BJ (cell line): ENCODE measurements at regions of chr1 and their contacts with region 1.

Region 1: DNA sequence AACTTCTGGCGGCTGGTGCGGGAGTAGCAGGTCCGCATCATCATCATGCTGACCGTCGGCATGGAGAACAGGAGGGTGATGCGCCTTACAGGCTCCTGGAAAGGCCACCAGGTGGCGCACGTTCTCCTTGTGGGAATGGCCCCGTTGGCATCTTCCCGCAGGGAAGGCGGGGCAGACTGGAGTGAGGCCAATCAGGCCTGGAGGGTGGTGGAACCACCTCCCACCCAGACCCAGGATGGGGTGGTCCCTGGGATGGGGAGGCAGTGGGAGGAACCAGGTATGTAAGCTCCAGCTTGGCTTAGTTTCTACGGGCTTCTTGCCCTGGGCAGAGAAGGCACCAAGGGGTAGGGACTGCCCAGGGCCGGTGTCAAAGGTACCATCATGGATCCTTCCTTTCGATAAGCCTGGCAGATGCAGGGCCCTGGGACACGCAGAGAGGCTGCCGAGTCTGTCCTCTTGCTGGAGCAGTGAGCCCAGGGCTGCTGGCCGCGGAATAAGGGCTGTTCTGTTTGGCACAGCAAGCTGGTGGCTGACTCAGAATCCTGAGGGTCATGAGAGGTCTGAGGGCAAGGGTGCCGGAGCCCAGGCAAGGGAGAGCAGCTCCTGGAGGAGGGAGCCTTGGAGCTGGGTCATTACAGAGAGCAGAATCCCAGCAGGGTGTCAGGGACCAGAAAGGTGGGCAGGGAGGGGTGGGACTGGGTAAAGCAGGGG is 8.7 kb upstream of the LGR6 start:
- DNase-seq: peak; percentile 10
- H3K4me3 ChIP-seq: no peak overlapping the region
- H3K27me3 ChIP-seq: peaks cover 25% of the 10 kb centered on the region
- CTCF ChIP-seq: peak; percentile 95

Region 2: DNA sequence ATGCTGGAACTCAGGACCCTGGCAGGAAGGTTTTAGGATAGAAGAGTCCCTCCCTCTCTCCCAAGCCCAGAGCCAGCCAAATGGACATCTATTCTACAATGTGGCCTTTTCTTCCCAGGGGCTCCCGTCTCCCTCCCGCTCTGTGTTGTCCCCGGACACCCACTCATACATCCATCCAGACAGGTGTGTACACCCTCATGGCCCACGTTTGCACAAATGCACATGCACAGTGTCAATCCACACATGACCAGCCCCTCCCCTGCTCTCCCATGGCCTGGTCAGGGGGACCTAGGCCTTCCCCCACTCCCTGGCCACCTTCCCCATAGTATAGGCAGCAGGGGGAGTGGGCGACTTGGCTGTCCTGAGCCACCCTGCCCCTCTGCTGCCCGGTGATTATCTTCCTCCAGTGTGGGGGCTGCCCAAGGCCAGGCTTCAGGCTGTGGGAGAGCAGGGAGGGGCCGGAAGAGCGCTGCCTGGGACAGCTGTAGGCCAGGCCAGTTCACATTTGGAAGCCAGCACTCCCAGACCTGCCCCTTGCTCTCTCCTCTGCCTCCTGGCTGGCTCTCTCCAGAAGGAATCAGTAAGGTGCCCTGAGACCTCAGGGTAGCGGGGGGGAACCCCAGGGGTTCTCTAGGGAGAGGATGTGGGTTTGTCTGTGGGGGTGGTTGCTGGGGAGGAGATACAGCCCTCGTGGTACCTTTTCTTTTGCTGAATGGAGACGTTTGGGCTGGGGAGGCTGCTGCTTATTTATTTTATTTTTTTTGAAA is 20.5 kb before region 1 on chr1:
- CTCF ChIA-PET with region 1: interaction called, 10 read pairs
- POLR2A ChIA-PET with region 1: no interaction called
- DNase-seq: no peak
- H3K4me3 ChIP-seq: no peak overlapping the region
- H3K27me3 ChIP-seq: peaks cover 6% of the 10 kb centered on the region
- CTCF ChIP-seq: no peak

Region 3: GRCh38 chr1:202283379-202283844 is 98.5 kb after region 1 on chr1:
- CTCF ChIA-PET with region 1: interaction called, 15 read pairs
- POLR2A ChIA-PET with region 1: no interaction called
- DNase-seq: peak; percentile 38
- H3K4me3 ChIP-seq: no peak overlapping the region
- H3K27me3 ChIP-seq: peaks cover under 1% of the 10 kb centered on the region
- CTCF ChIP-seq: no peak

Region 4: DNA sequence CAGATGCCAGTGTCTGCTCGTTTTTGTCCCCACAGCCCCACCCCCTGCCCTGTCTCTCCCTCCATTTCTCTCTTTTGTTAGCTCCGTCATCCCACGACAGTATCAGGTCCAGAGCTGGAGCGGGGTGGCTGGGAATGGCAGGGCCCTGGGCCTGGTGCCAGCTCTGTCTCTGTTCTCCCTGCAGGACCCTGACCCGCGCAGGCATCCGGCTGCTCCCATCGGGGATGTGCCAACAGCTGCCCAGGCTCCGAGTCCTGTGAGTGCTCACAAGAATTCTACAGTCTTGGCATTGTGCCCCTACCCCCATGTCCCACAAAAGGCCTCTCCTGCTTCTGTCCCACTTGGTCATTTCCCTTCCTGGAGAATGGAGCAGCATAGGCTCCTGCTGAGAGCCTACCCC is 119.5 kb after region 1 on chr1:
- CTCF ChIA-PET with region 1: interaction called, 51 read pairs
- POLR2A ChIA-PET with region 1: no interaction called
- DNase-seq: no peak
- H3K4me3 ChIP-seq: no peak overlapping the region
- H3K27me3 ChIP-seq: peaks cover 59% of the 10 kb centered on the region
- CTCF ChIP-seq: no peak

Region 5: DNA sequence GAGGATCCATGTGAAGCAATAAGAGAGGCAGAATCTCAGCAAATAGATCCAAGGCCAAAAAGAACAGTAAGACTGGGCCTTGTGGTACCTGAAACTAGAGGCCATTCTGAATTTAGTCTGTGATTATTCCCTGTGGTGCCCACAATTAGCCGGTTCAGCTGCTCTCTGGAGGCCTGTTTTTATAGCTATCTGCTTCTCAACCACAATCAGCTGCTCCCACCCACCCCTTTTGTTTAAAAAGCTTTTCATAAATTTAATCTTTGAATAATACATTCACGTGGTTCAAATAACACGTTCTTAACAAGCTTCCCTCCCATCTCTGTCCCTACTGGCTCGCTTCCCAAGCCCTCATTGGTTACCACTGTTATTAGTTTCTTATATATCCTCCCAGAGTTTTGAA is 138.8 kb after region 1 on chr1:
- CTCF ChIA-PET with region 1: interaction called, 206 read pairs
- POLR2A ChIA-PET with region 1: no interaction called
- DNase-seq: no peak
- H3K4me3 ChIP-seq: no peak overlapping the region
- H3K27me3 ChIP-seq: peaks cover 8% of the 10 kb centered on the region
- CTCF ChIP-seq: no peak

Region 6: DNA sequence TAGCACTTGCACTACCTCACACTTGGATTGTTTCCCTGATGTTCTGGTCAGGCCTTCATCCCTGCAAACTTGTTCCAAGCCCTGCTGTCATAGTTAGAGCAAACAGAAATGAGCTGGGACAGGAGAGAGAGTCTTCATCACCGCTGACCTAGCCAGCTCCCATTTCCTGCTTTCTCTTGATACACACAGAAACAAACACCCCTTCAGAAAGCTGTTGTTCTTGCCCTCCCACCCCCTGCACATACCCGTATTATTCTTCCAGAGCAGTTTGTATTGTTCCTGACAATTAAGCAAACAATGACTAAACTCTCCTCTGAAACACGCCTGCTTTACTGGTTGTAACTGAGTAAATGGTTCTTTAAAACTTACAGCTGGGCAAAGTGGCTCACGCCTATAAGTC is 528.2 kb after region 1 on chr1:
- CTCF ChIA-PET with region 1: interaction called, 37 read pairs
- POLR2A ChIA-PET with region 1: no interaction called
- DNase-seq: no peak
- H3K4me3 ChIP-seq: no peak overlapping the region
- H3K27me3 ChIP-seq: peaks cover 48% of the 10 kb centered on the region
- CTCF ChIP-seq: no peak